ENCODE measurements at regions of chr3 and their contacts with region 1.

Region 1: DNA sequence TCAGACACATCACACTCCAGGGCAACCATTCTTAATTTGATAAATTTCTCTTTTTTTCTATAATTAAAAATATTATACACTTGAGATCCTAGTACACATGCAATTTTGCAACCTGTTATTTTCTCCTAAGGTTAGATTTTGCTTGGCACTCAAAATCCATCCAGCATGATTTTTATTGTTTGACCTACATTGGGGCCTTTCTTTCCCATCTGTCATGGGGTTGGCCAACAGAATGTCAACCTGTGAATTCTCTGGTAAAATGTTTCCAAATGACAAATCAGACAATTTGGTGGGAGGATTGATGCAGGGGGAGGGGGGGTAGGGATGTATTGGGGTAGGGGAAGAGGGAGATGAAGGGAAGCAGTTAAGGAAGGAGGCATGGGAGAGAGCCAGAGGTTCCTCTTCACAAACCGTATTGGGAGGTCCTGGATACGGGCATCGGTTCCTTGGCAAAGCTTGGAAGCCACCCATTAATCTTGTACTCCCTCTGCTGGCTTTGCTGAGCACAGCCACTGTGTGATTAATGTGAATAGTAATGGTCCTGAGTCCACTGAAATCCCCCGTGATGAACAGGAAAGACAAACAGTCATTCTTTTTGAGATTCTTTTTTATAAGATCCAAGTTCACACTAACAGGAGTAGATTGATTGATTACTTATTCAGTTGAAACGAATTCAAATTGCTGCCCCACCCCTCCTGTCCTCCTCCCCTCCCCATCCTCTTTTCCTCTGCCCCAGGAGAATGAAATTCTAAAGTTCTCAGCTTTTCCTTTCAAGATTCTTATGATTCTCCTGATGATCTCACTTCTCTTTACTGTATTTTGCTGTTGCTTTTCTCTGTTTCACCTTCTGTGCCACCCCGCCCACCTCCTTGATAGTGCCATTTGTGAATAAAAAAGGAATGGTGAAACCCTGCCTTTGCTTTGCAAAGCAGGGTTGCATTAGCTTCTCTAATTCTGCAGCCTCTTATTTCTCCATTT is 82.2 kb upstream of the SLC25A26 start:
- DNase-seq: peak; percentile 77
- H3K4me3 Mint-ChIP-seq: no peak overlapping the region
- H3K27ac Mint-ChIP-seq: no peak overlapping the region
- H3K4me1 Mint-ChIP-seq: no peaks in the 10 kb centered on the region
- H3K27me3 Mint-ChIP-seq: peaks cover 15% of the 10 kb centered on the region
- CTCF ChIP-seq: peak; percentile 74

Region 2: DNA sequence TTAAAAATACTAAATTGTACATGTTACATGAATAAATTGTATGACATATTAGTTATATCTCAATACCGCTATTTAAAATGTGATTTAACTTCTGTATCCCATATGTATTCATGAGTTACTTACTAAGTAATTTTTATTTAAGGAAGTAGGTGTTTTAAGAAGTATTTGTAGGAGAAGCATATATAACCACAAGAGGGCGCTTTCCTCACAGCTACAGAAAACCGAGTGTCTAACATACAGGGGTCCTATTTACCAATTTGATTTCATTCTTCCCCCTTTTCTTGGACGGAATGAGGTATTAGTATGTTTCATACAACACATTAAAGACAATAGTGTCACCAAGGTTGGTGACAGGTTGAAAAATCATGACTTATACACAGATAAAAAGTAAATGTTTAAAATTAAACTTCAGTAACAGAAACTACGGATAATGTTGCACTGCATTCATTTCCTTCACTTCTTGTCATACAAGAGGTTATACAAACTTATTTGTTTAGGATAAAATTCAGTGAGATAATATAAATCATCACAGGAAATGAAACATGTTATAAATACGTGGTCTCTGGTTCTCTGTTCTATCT is 353.5 kb before region 1 on chr3:
- CTCF ChIA-PET with region 1: interaction called, 27 read pairs
- POLR2A ChIA-PET with region 1: interaction called, 3 read pairs
- intact Hi-C with region 1: loop called (anchors 1 kb)
- DNase-seq: peak; percentile 48
- H3K4me3 Mint-ChIP-seq: no peak overlapping the region
- H3K27ac Mint-ChIP-seq: no peak overlapping the region
- H3K4me1 Mint-ChIP-seq: no peaks in the 10 kb centered on the region
- H3K27me3 Mint-ChIP-seq: no peaks in the 10 kb centered on the region
- CTCF ChIP-seq: peak; percentile 61

Region 3: DNA sequence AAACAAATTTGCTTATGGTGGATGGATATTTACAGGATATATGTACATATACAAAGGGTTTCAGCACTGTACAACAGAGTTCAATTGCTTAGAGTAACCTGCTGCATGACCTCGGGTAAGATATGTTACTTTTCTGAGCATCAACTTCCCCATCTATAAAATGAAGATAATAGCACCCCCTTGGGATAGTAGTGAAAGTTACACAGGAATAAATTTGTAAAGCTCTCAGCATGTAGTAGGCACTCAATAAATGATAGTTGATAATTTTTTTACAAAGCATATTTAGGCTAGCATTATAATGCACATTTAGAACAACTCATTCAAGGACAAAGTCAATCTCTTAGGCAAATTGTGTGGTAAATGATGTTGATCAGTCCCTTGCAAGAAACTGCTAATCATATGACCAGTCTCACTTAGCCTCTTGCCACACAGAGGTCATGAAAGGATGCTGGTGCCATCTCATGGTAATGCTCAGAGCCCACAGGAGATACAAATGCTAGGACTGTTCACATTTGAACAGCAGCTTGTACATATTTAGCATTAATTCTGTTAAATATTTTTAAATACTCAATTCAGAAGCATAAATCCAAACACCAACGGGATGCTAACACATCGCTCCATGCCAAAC is 223.8 kb before region 1 on chr3:
- CTCF ChIA-PET with region 1: interaction called, 3 read pairs
- POLR2A ChIA-PET with region 1: no interaction called
- intact Hi-C with region 1: loop called (anchors 1 kb)
- DNase-seq: peak; percentile 18
- H3K4me3 Mint-ChIP-seq: no peak overlapping the region
- H3K27ac Mint-ChIP-seq: no peak overlapping the region
- H3K4me1 Mint-ChIP-seq: no peaks in the 10 kb centered on the region
- H3K27me3 Mint-ChIP-seq: no peaks in the 10 kb centered on the region
- CTCF ChIP-seq: peak; percentile 31

Region 4: GRCh38 chr3:66038726-66039589 is 99.7 kb before region 1 on chr3 and contains the start of gene MAGI1:
- CTCF ChIA-PET with region 1: interaction called, 29 read pairs
- POLR2A ChIA-PET with region 1: no interaction called
- intact Hi-C with region 1: loop called (anchors 2 kb)
- DNase-seq: peak; percentile 91
- H3K4me3 Mint-ChIP-seq: peak within 1 kb of the TSS; percentile 91
- H3K27ac Mint-ChIP-seq: peak within 1 kb of the TSS; percentile 89
- H3K4me1 Mint-ChIP-seq: peaks cover 23% of the 10 kb centered on the region
- H3K27me3 Mint-ChIP-seq: peaks cover 10% of the 10 kb centered on the region
- CTCF ChIP-seq: no peak
- total RNA-seq, gene MAGI1: 6.2 and 6.3 TPM in 2 replicates

Region 5: DNA sequence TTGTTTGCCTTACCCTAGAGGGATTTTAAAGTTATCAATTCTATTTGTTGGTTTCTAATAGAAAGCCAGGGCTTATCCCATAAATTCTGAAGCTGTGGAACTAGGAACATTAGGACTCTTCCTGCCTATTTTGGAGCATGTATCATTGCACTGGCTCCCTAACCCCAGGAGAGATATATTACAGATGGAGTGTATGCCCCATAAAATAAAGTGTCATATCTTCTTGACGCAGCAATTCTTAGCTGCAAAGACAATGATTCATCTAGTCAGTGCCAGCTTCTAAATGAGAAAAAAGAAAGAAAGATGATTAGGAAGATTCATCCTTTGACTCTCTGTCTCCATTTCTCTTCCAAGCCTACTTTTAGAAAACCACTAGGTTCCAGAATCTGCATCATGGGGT is 25.1 kb before region 1 on chr3:
- CTCF ChIA-PET with region 1: interaction called, 12 read pairs
- POLR2A ChIA-PET with region 1: no interaction called
- intact Hi-C with region 1: no loop called
- DNase-seq: no peak
- H3K4me3 Mint-ChIP-seq: no peak overlapping the region
- H3K27ac Mint-ChIP-seq: no peak overlapping the region
- H3K4me1 Mint-ChIP-seq: peaks cover 29% of the 10 kb centered on the region
- H3K27me3 Mint-ChIP-seq: no peaks in the 10 kb centered on the region
- CTCF ChIP-seq: no peak

Measured in MCF 10A (cell line).